Activated CD4-positive, alpha-beta T cell treated with anti-CD3 and anti-CD28 coated beads for 36 hours (primary cell): ENCODE measurements at regions of chr11 and their contacts with region 1.

Region 1: GRCh38 chr11:126224647-126225294 is 13.2 kb downstream of the FAM118B start:
- DNase-seq: no peak
- ATAC-seq: no peak
- H3K4me3 Mint-ChIP-seq: no peak overlapping the region
- H3K27ac Mint-ChIP-seq: no peak overlapping the region
- H3K4me1 Mint-ChIP-seq: peaks cover 2% of the 10 kb centered on the region
- H3K27me3 Mint-ChIP-seq: no peaks in the 10 kb centered on the region

Region 2: GRCh38 chr11:126202646-126203359 is 22.0 kb before region 1 on chr11:
- CTCF ChIA-PET with region 1: no interaction called
- POLR2A ChIA-PET with region 1: interaction called, 11 read pairs
- intact Hi-C with region 1: no loop called
- DNase-seq: no peak
- ATAC-seq: no peak
- H3K4me3 Mint-ChIP-seq: no peak overlapping the region
- H3K27ac Mint-ChIP-seq: no peak overlapping the region
- H3K4me1 Mint-ChIP-seq: no peaks in the 10 kb centered on the region
- H3K27me3 Mint-ChIP-seq: no peaks in the 10 kb centered on the region

Region 3: GRCh38 chr11:126268708-126269579 is 44.2 kb after region 1 on chr11 and contains the starts of genes FOXRED1 and SRPRA:
- CTCF ChIA-PET with region 1: no interaction called
- POLR2A ChIA-PET with region 1: no interaction called
- intact Hi-C with region 1: no loop called
- DNase-seq: peak; percentile 100
- ATAC-seq: peak; percentile 100
- H3K4me3 Mint-ChIP-seq: peak within 1 kb of the TSS; percentile 86
- H3K27ac Mint-ChIP-seq: peak within 1 kb of the TSS; percentile 95
- H3K4me1 Mint-ChIP-seq: peaks cover 38% of the 10 kb centered on the region
- H3K27me3 Mint-ChIP-seq: no peaks in the 10 kb centered on the region
- total RNA-seq, gene FOXRED1: 39.0 to 43.7 TPM
- total RNA-seq, gene SRPRA: 131 to 139 TPM

Region 4: DNA sequence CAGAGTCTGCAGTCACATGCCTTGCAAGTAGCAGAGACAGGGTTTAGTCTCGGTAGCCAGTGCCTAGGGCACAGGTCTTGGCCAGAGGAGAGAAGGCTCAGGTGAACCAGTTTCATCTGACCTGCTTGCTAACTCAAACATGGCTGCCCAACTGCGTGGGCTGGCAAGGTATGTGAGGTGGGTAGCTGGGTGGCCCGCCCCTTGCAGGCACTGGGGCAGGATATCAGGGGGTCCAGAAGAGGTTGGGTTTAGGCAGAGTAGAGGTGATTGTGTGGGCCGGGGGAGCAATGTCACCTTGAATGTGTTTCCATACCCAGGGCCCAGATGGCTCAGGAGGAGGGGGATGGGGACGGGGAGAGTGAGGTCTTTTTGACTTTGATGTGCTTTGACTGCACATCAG is 168.4 kb after region 1 on chr11:
- CTCF ChIA-PET with region 1: no interaction called
- POLR2A ChIA-PET with region 1: no interaction called
- intact Hi-C with region 1: no loop called
- DNase-seq: no peak
- ATAC-seq: no peak
- H3K4me3 Mint-ChIP-seq: no peak overlapping the region
- H3K27ac Mint-ChIP-seq: no peak overlapping the region
- H3K4me1 Mint-ChIP-seq: no peaks in the 10 kb centered on the region
- H3K27me3 Mint-ChIP-seq: no peaks in the 10 kb centered on the region

Region 5: GRCh38 chr11:127003260-127003981 is 778.6 kb after region 1 on chr11:
- CTCF ChIA-PET with region 1: no interaction called
- POLR2A ChIA-PET with region 1: no interaction called
- intact Hi-C with region 1: no loop called
- DNase-seq: peak; percentile 27
- ATAC-seq: peak; percentile 63
- H3K4me3 Mint-ChIP-seq: no peak overlapping the region
- H3K27ac Mint-ChIP-seq: no peak overlapping the region
- H3K4me1 Mint-ChIP-seq: peaks cover 3% of the 10 kb centered on the region
- H3K27me3 Mint-ChIP-seq: peaks cover 48% of the 10 kb centered on the region